Caco-2 (cell line): ENCODE measurements at regions of chr11 and their contacts with region 1.

Region 1: GRCh38 chr11:76680518-76681425 is 10.2 kb upstream of the LRRC32 start:
- DNase-seq: peak; percentile 85 to 90
- H3K4me3 ChIP-seq: no peak overlapping the region
- H3K4me3 Mint-ChIP-seq: no peak overlapping the region
- H3K27ac Mint-ChIP-seq: no peak overlapping the region
- H3K4me1 ChIP-seq: no peaks in the 10 kb centered on the region
- H3K4me1 Mint-ChIP-seq: no peaks in the 10 kb centered on the region
- H3K27me3 ChIP-seq: no peaks in the 10 kb centered on the region
- H3K27me3 Mint-ChIP-seq: peaks cover 6% of the 10 kb centered on the region
- CTCF ChIP-seq: peak; percentile 96 to 98

Region 2: DNA sequence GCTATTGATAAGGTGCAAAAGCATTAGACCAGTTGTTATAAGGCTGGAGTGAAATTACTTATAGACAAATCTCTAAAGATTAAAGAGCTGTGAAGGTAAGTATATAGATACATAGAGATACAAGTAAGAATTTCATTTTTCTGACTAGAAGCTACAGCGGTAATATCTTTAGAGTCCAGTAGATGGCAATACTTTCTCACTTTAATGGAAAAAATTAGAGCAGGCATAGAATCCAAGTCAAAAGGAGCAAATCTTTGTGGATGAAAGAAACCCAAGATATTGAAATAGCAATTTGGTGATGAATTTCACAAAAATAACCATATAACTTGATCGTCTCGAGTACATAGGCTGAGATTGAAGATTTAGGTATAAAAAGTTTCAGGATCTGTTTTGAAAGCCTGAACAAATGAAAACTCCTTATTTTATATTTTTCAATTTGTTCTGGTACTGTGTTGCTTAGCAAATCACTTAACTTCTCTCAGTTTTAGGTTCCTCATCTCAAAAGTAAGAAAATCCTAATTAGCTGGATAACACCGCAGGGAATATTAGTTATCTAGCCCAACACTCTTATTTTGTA is 783.8 kb before region 1 on chr11:
- CTCF ChIA-PET with region 1: no interaction called
- POLR2A ChIA-PET with region 1: no interaction called
- intact Hi-C with region 1: loop called (anchors 10 kb)
- DNase-seq: peak in 1 of 2 experiments; percentile 56
- H3K4me3 ChIP-seq: no peak overlapping the region
- H3K4me3 Mint-ChIP-seq: no peak overlapping the region
- H3K27ac Mint-ChIP-seq: no peak overlapping the region
- H3K4me1 ChIP-seq: no peaks in the 10 kb centered on the region
- H3K4me1 Mint-ChIP-seq: no peaks in the 10 kb centered on the region
- H3K27me3 ChIP-seq: no peaks in the 10 kb centered on the region
- H3K27me3 Mint-ChIP-seq: no peaks in the 10 kb centered on the region
- CTCF ChIP-seq: peak; percentile 68 to 81

Region 3: GRCh38 chr11:76551400-76551799 is 129.4 kb before region 1 on chr11:
- CTCF ChIA-PET with region 1: interaction called, 7 read pairs
- POLR2A ChIA-PET with region 1: no interaction called
- intact Hi-C with region 1: loop called (anchors 1 kb)
- DNase-seq: no peak
- H3K4me3 ChIP-seq: no peak overlapping the region
- H3K4me3 Mint-ChIP-seq: no peak overlapping the region
- H3K27ac Mint-ChIP-seq: no peak overlapping the region
- H3K4me1 ChIP-seq: 0 out of 2 replicates have a peak, but pooled peaks cover 3% of the 10 kb centered on the region
- H3K4me1 Mint-ChIP-seq: no peaks in the 10 kb centered on the region
- H3K27me3 ChIP-seq: no peaks in the 10 kb centered on the region
- H3K27me3 Mint-ChIP-seq: no peaks in the 10 kb centered on the region
- CTCF ChIP-seq: no peak

Region 4: GRCh38 chr11:76598426-76598839 is 82.3 kb before region 1 on chr11:
- CTCF ChIA-PET with region 1: interaction called, 5 read pairs
- POLR2A ChIA-PET with region 1: no interaction called
- intact Hi-C with region 1: loop called (anchors 1 kb)
- DNase-seq: peak; percentile 56 to 64
- H3K4me3 ChIP-seq: no peak overlapping the region
- H3K4me3 Mint-ChIP-seq: no peak overlapping the region
- H3K27ac Mint-ChIP-seq: no peak overlapping the region
- H3K4me1 ChIP-seq: no peaks in the 10 kb centered on the region
- H3K4me1 Mint-ChIP-seq: no peaks in the 10 kb centered on the region
- H3K27me3 ChIP-seq: no peaks in the 10 kb centered on the region
- H3K27me3 Mint-ChIP-seq: no peaks in the 10 kb centered on the region
- CTCF ChIP-seq: peak; percentile 58 to 76